SK-N-SH (cell line): ENCODE measurements at regions of chr1 and their contacts with region 1.

Region 1: GRCh38 chr1:27192039-27192529 is 37.2 kb upstream of the SLC9A1 start:
- DNase-seq: no peak
- H3K4me3 ChIP-seq: no peak overlapping the region
- H3K27ac ChIP-seq: no peak overlapping the region
- H3K4me1 ChIP-seq: no peaks in the 10 kb centered on the region
- H3K27me3 ChIP-seq: no peaks in the 10 kb centered on the region
- CTCF ChIP-seq: no peak
- EP300 ChIP-seq: no peak
- RAD21 ChIP-seq: no peak

Region 2: DNA sequence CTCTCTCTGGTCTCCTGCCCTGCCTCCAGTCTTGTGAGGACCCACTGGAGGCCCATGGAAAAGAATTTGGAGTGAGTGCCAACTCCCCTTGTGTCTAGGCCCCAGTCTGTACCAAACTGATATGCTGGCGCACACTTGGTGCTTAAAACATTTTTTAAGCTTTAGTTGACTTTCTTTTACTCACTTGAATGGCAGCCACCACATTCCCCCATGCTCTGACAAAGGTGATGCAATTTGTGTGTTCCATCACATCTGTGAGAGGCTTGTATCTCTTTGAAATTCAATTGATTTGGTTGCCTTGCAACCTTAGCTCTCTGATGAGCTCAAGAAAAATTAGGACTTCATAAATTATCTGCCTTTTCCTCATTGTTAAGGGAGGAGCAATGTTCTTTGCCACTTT is 11.9 kb after region 1 on chr1:
- CTCF ChIA-PET with region 1: interaction called, 16 read pairs
- POLR2A ChIA-PET with region 1: no interaction called
- DNase-seq: no peak
- H3K4me3 ChIP-seq: no peak overlapping the region
- H3K27ac ChIP-seq: no peak overlapping the region
- H3K4me1 ChIP-seq: no peaks in the 10 kb centered on the region
- H3K27me3 ChIP-seq: no peaks in the 10 kb centered on the region
- CTCF ChIP-seq: no peak
- EP300 ChIP-seq: no peak
- RAD21 ChIP-seq: no peak

Region 3: GRCh38 chr1:27225621-27226020 is 33.5 kb after region 1 on chr1:
- CTCF ChIA-PET with region 1: interaction called, 10 read pairs
- POLR2A ChIA-PET with region 1: no interaction called
- DNase-seq: no peak
- H3K4me3 ChIP-seq: no peak overlapping the region
- H3K27ac ChIP-seq: no peak overlapping the region
- H3K4me1 ChIP-seq: no peaks in the 10 kb centered on the region
- H3K27me3 ChIP-seq: no peaks in the 10 kb centered on the region
- CTCF ChIP-seq: no peak
- EP300 ChIP-seq: no peak
- RAD21 ChIP-seq: no peak

Region 4: DNA sequence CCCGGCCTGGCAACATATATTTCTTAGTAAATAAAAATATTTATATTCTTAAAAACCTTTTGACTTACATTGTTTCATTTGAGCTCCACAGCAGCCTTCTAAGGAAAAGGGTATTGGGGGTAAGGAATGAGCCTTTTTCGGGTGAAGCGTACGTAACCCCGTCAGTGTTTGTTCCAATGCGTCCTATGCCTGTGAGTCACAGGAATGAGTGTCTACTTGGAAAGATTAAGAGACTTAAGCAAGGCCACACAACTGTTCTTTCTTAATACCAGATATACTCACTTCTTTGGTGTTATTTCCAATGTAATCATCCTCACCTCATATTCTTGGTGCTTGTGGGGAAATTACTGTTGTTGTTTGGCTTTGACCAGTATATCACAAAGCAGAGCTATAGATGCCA is 65.1 kb after region 1 on chr1:
- CTCF ChIA-PET with region 1: no interaction called
- POLR2A ChIA-PET with region 1: no interaction called
- DNase-seq: no peak
- H3K4me3 ChIP-seq: no peak overlapping the region
- H3K27ac ChIP-seq: no peak overlapping the region
- H3K4me1 ChIP-seq: no peaks in the 10 kb centered on the region
- H3K27me3 ChIP-seq: no peaks in the 10 kb centered on the region
- CTCF ChIP-seq: no peak
- EP300 ChIP-seq: no peak
- RAD21 ChIP-seq: no peak